Cardiac septum (tissue), 1 donor: ENCODE measurements at regions of chr17 and their contacts with region 1.

Region 1: DNA sequence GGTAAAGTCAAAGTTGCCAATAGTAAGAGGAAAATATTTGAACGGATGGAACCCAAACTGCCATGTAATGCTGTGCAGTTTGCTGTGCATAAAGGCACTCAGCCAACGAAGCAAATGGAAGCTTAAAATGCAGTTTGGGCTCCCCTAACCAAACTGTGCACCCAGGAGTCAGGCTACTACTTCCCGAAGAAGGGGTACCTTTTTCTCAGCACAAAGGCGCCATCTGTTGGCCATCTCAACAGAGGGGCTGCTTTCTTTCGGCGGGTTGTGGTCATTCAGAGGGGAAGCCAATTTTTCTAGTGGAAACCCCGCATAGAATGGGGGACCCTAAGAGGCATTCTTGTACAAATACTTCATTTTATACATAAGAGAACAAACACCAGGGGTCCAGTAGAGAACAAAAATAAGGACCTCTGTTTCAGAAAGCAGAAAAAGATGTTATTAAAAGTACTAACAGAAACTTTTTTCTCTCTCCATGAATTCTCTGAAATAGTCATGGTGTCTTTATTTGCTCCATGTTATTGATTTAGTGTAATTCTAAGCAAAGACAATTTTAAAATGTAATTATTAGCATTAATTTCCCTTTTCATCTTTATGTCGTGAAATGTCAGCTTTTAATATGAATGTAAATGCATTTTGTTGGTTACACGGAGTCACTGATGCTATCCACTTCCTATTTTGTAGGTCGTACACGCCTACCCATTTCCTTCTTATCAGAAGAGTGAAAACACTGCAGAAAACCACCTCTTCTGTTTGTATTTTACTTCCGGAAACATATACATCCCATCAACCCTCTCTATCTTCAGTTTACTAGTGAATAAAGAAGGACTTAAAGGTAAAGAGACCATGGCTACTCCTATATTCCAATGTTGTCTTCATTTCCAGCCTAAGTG is 453.3 kb downstream of the KCNJ2 start:
- DNase-seq: no peak

Region 2: GRCh38 chr17:69525920-69526841 is 1096.4 kb before region 1 on chr17:
- intact Hi-C with region 1: loop called (anchors 5 kb)
- DNase-seq: no peak

Region 3: GRCh38 chr17:69574257-69575197 is 1048.1 kb before region 1 on chr17:
- intact Hi-C with region 1: loop called (anchors 2 kb)
- DNase-seq: no peak

Region 4: DNA sequence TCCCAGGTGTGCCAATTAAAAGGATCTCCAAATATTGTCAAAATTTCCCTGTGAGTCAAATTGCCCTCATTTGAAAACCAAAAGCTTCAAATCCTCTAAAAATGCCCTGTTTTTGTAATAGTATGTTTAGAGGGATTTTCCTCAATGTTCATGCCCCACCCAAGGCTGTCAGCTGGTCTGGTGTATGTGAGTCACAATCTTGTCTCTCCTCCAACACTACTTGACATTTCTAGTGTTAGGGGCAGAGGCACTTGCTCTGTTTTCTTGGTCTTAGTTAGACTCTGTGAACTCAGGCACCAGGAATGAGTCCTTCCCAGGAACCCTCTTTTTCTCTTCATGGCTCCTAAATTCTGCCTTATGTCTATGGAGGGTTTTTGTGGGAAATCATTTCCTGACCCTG is 181.5 kb after region 1 on chr17:
- intact Hi-C with region 1: no loop called
- DNase-seq: no peak